Activated naive CD4-positive, alpha-beta T cell treated with anti-CD3 and anti-CD28 coated beads, Interleukin-2, amount 10 ng/mL, durations not matched to agents 7 days and 5 days (primary cell): ENCODE measurements at regions of chr12 and their contacts with region 1.

Region 1: GRCh38 chr12:53274445-53274844 is 6.3 kb downstream of the ESPL1 start:
- DNase-seq: no peak
- H3K4me3 Mint-ChIP-seq: no peak overlapping the region
- H3K27ac Mint-ChIP-seq: no peak overlapping the region
- H3K4me1 Mint-ChIP-seq: peaks cover 34% of the 10 kb centered on the region
- H3K27me3 Mint-ChIP-seq: no peaks in the 10 kb centered on the region

Region 2: GRCh38 chr12:53287741-53288216 is 13.3 kb after region 1 on chr12:
- CTCF ChIA-PET with region 1: interaction called, 14 read pairs
- DNase-seq: peak; percentile 82
- H3K4me3 Mint-ChIP-seq: no peak overlapping the region
- H3K27ac Mint-ChIP-seq: peak overlapping the region; percentile 65
- H3K4me1 Mint-ChIP-seq: peaks cover 4% of the 10 kb centered on the region
- H3K27me3 Mint-ChIP-seq: no peaks in the 10 kb centered on the region